A549 (cell line): ENCODE measurements at regions of chr14 and their contacts with region 1.

Region 1: GRCh38 chr14:29548948-29549370 is 378.7 kb downstream of the PRKD1 start:
- DNase-seq: peak; percentile 38 to 68
- ATAC-seq: peak; percentile 88 to 89
- H3K4me3 ChIP-seq: no peak overlapping the region
- H3K27ac ChIP-seq: no peak overlapping the region
- H3K4me1 ChIP-seq: no peaks in the 10 kb centered on the region
- CTCF ChIP-seq: peak; percentile 67
- EP300 ChIP-seq: no peak
- POLR2A ChIP-seq: no peak
- RAD21 ChIP-seq: peak; percentile 65 to 75

Region 2: GRCh38 chr14:29805415-29806123 is 256.6 kb after region 1 on chr14:
- CTCF ChIA-PET with region 1: no interaction called
- POLR2A ChIA-PET with region 1: no interaction called
- DNase-seq: peak in 1 of 2 experiments; percentile 48
- ATAC-seq: peak; percentile 45 to 71; a peak in 4 of 6 replicates
- H3K4me3 ChIP-seq: no peak overlapping the region
- H3K27ac ChIP-seq: peak overlapping the region; percentile 62 to 63; a peak in 5 of 6 replicates
- H3K4me1 ChIP-seq: peaks cover 14% of the 10 kb centered on the region
- CTCF ChIP-seq: no peak
- EP300 ChIP-seq: no peak
- POLR2A ChIP-seq: no peak
- RAD21 ChIP-seq: no peak

Region 3: GRCh38 chr14:29971101-29971500 is 422.1 kb after region 1 on chr14:
- CTCF ChIA-PET with region 1: no interaction called
- POLR2A ChIA-PET with region 1: no interaction called
- DNase-seq: no peak
- ATAC-seq: no peak
- H3K4me3 ChIP-seq: no peak overlapping the region
- H3K27ac ChIP-seq: no peak overlapping the region
- H3K4me1 ChIP-seq: no peaks in the 10 kb centered on the region
- CTCF ChIP-seq: no peak
- EP300 ChIP-seq: no peak
- POLR2A ChIP-seq: no peak
- RAD21 ChIP-seq: no peak

Region 4: DNA sequence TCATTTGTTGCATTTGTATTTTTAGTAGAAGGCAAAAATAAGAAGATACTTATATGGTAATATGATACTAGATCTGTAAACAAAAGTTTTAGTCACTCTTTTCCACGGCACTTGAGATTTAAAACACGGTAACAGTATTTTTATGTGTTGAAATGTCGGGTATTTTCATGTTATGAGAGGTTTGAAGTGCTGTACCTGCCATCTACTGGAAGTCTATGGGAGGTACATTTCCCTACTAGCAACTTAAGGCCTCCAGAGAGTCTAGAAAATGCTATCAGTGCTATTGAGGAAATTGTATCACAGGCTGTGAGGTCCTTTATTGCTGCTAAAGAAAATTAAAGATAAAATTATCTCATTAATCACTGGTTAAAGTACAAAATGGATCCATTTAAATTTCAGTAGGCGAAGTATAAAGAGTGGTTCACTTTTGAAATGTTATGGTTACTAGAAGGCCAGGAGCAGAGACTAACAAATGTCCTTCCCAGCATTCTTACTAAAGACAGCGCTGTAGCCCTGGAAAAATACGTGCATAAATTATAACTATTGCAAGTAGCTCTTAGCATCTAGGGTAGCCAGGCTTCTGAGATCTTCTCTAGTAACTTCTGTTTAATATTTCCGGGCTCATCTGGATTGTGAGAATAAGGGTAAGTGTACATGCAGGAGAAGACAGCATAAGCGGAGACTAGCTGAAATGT is 456.3 kb after region 1 on chr14:
- CTCF ChIA-PET with region 1: interaction called, 11 read pairs
- POLR2A ChIA-PET with region 1: no interaction called
- DNase-seq: peak; percentile 18 to 64
- ATAC-seq: peak; percentile 85
- H3K4me3 ChIP-seq: no peak overlapping the region
- H3K27ac ChIP-seq: no peak overlapping the region
- H3K4me1 ChIP-seq: no peaks in the 10 kb centered on the region
- CTCF ChIP-seq: peak; percentile 72
- EP300 ChIP-seq: no peak
- POLR2A ChIP-seq: no peak
- RAD21 ChIP-seq: peak; percentile 77 to 79